ENCODE measurements at regions of chr12 and their contacts with region 1.

Region 1: GRCh38 chr12:2583091-2583497 is 211.7 kb upstream of the FKBP4 start:
- DNase-seq: no peak
- H3K4me3 ChIP-seq: no peak overlapping the region
- H3K27me3 ChIP-seq: no peaks in the 10 kb centered on the region
- CTCF ChIP-seq: peak; percentile 53

Region 2: GRCh38 chr12:2034633-2035430 is 548.3 kb before region 1 on chr12:
- CTCF ChIA-PET with region 1: interaction called, 15 read pairs
- POLR2A ChIA-PET with region 1: no interaction called
- DNase-seq: no peak
- H3K4me3 ChIP-seq: peak overlapping the region; percentile 9; the same call in 1 of the 2 replicates
- H3K27me3 ChIP-seq: peaks cover 32% of the 10 kb centered on the region
- CTCF ChIP-seq: peak; percentile 76

Region 3: DNA sequence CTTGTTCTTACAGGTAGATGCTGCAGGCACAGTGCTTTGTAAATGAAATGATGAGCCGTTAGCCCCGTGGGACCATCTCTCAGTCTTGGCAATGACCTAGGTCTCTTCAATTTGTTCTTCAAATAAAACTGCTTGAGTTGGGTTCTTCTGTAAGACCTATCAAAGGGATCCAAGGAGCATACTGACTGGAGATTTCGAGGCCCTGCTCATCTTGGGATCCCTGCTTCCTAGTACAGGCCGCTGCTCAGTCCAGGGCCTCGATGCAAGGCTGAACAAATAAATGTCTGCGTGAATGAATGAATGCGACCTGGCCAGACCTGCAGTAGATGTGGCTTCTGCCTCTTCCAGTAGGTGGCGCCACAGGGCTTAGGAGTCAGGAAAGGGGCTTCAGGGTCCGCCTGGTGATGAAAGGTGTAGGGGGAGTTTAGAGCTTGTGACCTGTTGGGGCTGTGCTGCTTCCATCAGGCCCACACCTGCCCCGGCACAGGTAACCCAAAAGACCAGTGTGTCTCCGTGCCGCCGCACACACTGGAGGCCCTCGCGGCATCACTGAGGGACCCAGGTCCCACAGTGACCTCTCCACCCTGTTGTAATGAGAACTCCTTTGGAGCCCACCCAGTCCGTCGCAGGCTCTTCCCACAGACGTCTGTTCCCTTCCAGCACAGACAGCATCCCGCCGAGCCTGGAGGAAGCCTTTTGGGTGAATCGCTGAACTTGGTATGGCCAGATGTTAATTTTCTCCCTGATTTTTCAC is 525.9 kb before region 1 on chr12:
- CTCF ChIA-PET with region 1: interaction called, 25 read pairs
- POLR2A ChIA-PET with region 1: no interaction called
- DNase-seq: no peak
- H3K4me3 ChIP-seq: no peak overlapping the region
- H3K27me3 ChIP-seq: no peaks in the 10 kb centered on the region
- CTCF ChIP-seq: peak; percentile 86

Region 4: GRCh38 chr12:2562400-2562799 is 20.7 kb before region 1 on chr12:
- CTCF ChIA-PET with region 1: interaction called, 9 read pairs
- POLR2A ChIA-PET with region 1: interaction called, 17 read pairs
- DNase-seq: no peak
- H3K4me3 ChIP-seq: no peak overlapping the region
- H3K27me3 ChIP-seq: no peaks in the 10 kb centered on the region
- CTCF ChIP-seq: no peak

Region 5: DNA sequence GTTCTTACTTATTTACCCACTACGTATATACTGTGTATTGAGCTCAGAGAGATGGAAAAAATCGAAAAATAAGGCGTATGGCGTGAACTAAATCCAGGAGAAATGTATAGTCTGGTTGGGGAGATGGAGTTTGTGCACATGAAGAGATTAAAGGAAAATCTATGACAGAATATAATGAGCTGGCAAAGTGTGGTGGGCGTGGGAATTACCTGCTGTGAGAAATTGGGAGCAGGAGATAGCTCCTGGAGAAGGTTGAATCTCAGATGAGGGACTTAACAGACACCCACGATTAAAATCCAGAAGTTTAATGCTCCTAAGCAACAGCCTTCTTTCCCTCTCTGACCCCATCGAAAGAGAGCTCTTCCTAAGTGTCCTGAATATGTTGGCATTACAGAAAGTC is 12.5 kb before region 1 on chr12:
- CTCF ChIA-PET with region 1: interaction called, 11 read pairs
- POLR2A ChIA-PET with region 1: no interaction called
- DNase-seq: no peak
- H3K4me3 ChIP-seq: no peak overlapping the region
- H3K27me3 ChIP-seq: no peaks in the 10 kb centered on the region
- CTCF ChIP-seq: no peak

Region 6: GRCh38 chr12:2640705-2641104 is 57.6 kb after region 1 on chr12:
- CTCF ChIA-PET with region 1: no interaction called
- POLR2A ChIA-PET with region 1: no interaction called
- DNase-seq: peak; percentile 80
- H3K4me3 ChIP-seq: no peak overlapping the region
- H3K27me3 ChIP-seq: no peaks in the 10 kb centered on the region
- CTCF ChIP-seq: no peak